CD4-positive, alpha-beta memory T cell (primary cell): ENCODE measurements at regions of chr9 and their contacts with region 1.

Region 1: GRCh38 chr9:116687074-116687753 is at the start of gene TRIM32:
- DNase-seq: peak; percentile 89 to 95 (median 90)
- H3K4me3 ChIP-seq: peak within 1 kb of the TSS; percentile 73 to 80
- H3K4me3 Mint-ChIP-seq: peak within 1 kb of the TSS; percentile 86 to 98 (median 94)
- H3K27ac ChIP-seq: peak within 1 kb of the TSS; percentile 52
- H3K27ac Mint-ChIP-seq: peak within 1 kb of the TSS; percentile 87 to 97 (median 92)
- H3K4me1 ChIP-seq: peaks cover 57% of the 10 kb centered on the region
- H3K4me1 Mint-ChIP-seq: peaks cover 51 to 69% (median 55%) of the 10 kb centered on the region in 4 donors
- H3K27me3 ChIP-seq: no peaks in the 10 kb centered on the region
- H3K27me3 Mint-ChIP-seq: no peaks in the 10 kb centered on the region
- total RNA-seq, gene TRIM32: 21.8 to 22.1 TPM

Region 2: DNA sequence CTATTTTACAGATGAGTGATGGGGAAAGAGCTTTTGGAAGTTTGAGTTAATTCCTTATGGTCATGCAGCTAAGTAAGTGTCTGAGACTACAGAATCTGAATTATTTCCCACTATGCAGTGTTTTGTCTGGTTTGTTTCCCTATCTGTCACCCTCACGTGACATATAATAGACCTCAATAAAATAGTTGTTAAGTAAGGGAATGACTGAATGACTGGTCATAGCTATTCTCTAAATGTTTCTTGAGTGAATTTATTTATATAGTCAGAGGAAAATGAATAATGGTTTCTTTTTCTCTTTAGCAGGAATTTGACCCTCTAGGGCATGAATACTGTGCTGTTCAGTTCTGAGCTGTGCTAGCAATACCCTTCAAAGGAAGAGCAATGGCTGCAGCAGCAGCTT is 10.1 kb after region 1 on chr9:
- CTCF ChIA-PET with region 1: interaction called, 3 read pairs
- POLR2A ChIA-PET with region 1: interaction called, 19 read pairs
- intact Hi-C with region 1: no loop called
- DNase-seq: no peak
- H3K4me3 ChIP-seq: no peak overlapping the region
- H3K4me3 Mint-ChIP-seq: no peak overlapping the region
- H3K27ac ChIP-seq: no peak overlapping the region
- H3K27ac Mint-ChIP-seq: peak overlapping the region in 1 of 7 donors; percentile 18
- H3K4me1 ChIP-seq: peaks cover 41% of the 10 kb centered on the region
- H3K4me1 Mint-ChIP-seq: peaks cover 54 to 71% (median 60%) of the 10 kb centered on the region in 4 donors
- H3K27me3 ChIP-seq: no peaks in the 10 kb centered on the region
- H3K27me3 Mint-ChIP-seq: no peaks in the 10 kb centered on the region

Region 3: DNA sequence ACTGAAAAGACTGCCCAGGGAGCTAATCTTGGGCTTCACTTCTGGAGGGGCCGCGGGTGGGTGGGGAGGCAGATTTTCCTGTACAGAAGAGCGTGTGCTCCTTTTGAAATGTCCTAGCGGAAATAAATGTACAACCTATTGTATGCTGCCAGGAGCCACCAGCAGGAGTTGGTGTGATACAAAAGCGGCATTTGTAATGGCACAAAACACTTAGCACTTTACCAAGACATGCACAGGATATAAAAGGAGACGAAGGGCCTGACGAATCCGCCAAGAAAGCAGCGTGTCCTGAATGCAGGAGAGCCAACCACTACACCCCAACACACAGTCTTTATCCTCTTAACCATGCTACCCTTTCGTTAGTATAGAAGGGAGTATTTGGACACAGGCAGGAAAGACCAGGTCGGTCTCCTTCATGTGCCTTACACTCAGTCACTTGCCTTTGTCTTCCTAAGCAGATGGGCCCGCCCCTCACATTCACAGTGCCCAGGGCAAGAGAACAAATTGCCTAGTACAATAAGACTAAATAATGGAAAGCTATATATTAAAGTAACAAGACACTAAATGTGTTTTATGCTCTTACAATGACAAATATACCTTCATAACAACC is 218.0 kb after region 1 on chr9:
- CTCF ChIA-PET with region 1: no interaction called
- POLR2A ChIA-PET with region 1: no interaction called
- intact Hi-C with region 1: no loop called
- DNase-seq: no peak
- H3K4me3 ChIP-seq: no peak overlapping the region
- H3K4me3 Mint-ChIP-seq: no peak overlapping the region
- H3K27ac ChIP-seq: no peak overlapping the region
- H3K27ac Mint-ChIP-seq: no peak overlapping the region
- H3K4me1 ChIP-seq: no peaks in the 10 kb centered on the region
- H3K4me1 Mint-ChIP-seq: no peaks in the 10 kb centered on the region
- H3K27me3 ChIP-seq: no peaks in the 10 kb centered on the region
- H3K27me3 Mint-ChIP-seq: no peaks in the 10 kb centered on the region

Region 4: DNA sequence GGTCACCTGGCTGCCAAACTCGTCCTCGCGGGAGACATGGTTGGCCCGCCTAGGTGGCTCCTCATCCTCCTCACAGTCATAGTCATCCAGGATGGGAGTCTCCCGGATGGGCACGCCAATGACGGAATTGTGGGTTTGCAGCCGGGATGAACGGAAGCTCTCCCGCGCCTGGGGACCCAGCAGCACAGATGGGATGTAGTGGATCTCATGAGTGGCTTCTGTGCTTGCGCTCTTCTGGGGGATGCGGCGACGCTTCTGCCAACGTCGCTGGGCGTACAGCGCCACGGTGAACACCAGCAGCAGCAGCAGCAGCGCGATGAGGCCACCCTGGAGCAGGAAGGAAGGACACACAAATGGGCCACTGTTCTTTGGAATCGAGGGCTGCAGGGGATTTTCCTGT is 527.2 kb after region 1 on chr9:
- CTCF ChIA-PET with region 1: no interaction called
- POLR2A ChIA-PET with region 1: no interaction called
- intact Hi-C with region 1: no loop called
- DNase-seq: no peak
- H3K4me3 ChIP-seq: no peak overlapping the region
- H3K4me3 Mint-ChIP-seq: no peak overlapping the region
- H3K27ac ChIP-seq: no peak overlapping the region
- H3K27ac Mint-ChIP-seq: no peak overlapping the region
- H3K4me1 ChIP-seq: no peaks in the 10 kb centered on the region
- H3K4me1 Mint-ChIP-seq: no peaks in the 10 kb centered on the region
- H3K27me3 ChIP-seq: no peaks in the 10 kb centered on the region
- H3K27me3 Mint-ChIP-seq: no peaks in the 10 kb centered on the region